Ascending aorta (tissue), 2 donors: ENCODE measurements at regions of chr17 and their contacts with region 1.

Region 1: GRCh38 chr17:17591355-17592298 is at the start of gene PEMT:
- DNase-seq: peak; percentile 92 to 99
- H3K4me3 ChIP-seq: peak within 1 kb of the TSS; percentile 79 to 80
- H3K27ac ChIP-seq: peak within 1 kb of the TSS; percentile 81 to 85
- H3K4me1 ChIP-seq: peaks cover 2 to 14% of the 10 kb centered on the region in 2 donors
- H3K27me3 ChIP-seq: no peaks in the 10 kb centered on the region
- CTCF ChIP-seq: no peak
- total RNA-seq, gene PEMT: 690 TPM

Region 2: DNA sequence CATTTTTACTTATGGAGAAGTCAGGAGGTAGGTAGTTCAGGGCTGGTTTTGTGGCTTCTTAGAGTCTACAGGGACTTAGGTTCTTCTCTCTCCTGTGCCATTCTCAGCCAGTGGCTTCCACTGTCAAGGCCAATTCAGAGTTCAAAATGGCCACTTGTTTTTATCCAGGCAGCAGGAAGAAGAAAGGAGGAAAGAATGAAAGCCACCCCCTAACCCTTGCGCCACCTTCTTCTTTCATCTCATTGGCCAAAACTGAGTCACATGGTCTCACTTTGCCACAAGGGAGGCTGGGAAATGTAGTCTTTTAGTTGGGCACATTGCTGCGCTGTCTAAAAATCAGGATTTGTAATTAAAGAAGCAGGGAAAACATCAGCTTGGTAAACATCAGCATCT is 175.6 kb before region 1 on chr17:
- intact Hi-C with region 1: no loop called
- DNase-seq: no peak
- H3K4me3 ChIP-seq: no peak overlapping the region
- H3K27ac ChIP-seq: no peak overlapping the region
- H3K4me1 ChIP-seq: no peaks in the 10 kb centered on the region
- H3K27me3 ChIP-seq: no peaks in the 10 kb centered on the region
- CTCF ChIP-seq: no peak

Region 3: DNA sequence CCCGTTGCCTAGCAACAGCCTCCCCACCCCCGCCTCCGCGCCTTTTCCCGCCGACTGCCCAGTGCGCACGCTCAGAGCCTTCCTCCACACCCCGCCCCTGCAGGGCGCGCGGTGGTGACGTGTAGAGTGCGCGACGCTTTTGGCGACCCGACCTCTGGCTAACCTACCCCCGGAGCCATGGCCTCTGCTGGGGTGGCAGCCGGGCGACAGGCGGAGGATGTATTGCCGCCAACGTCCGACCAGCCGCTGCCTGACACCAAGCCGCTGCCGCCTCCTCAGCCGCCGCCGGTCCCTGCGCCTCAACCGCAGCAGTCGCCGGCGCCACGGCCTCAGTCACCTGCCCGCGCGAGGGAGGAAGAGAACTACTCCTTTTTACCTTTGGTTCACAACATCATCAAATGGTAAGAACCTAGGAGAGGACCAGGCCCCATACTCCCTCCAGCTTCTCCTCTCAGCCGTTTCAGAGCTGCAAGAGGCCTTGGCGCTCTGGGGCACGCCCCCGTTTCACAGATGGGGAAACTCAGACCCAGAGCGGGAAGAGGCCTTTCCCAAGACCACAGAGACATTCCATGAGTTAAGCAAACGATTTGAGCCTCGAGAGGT is 114.7 kb before region 1 on chr17 and contains the start of gene MED9:
- intact Hi-C with region 1: loop called (anchors 1 kb)
- DNase-seq: peak; percentile 66 to 95
- H3K4me3 ChIP-seq: peak within 1 kb of the TSS; percentile 82 to 91
- H3K27ac ChIP-seq: peak within 1 kb of the TSS; percentile 76 to 78
- H3K4me1 ChIP-seq: peaks cover 10 to 11% of the 10 kb centered on the region in 2 donors
- H3K27me3 ChIP-seq: no peaks in the 10 kb centered on the region
- CTCF ChIP-seq: no peak
- total RNA-seq, gene MED9: 16.9 TPM

Region 4: GRCh38 chr17:18087610-18088491 is 496.2 kb after region 1 on chr17 and contains the start of gene DRG2:
- intact Hi-C with region 1: loop called (anchors 1 kb)
- DNase-seq: peak; percentile 40 to 95
- H3K4me3 ChIP-seq: peak within 1 kb of the TSS; percentile 90 to 95
- H3K27ac ChIP-seq: peak within 1 kb of the TSS; percentile 83 to 85
- H3K4me1 ChIP-seq: peaks cover 5 to 13% of the 10 kb centered on the region in 2 donors
- H3K27me3 ChIP-seq: no peaks in the 10 kb centered on the region
- CTCF ChIP-seq: peak in 1 of 3 experiments; percentile 16
- total RNA-seq, gene DRG2: 118 TPM